ENCODE measurements at regions of chr17 and their contacts with region 1.

Region 1: GRCh38 chr17:17416007-17416399 is 60.8 kb upstream of the MED9 start:
- DNase-seq: no peak
- ATAC-seq: peak in 2 of 8 donors; percentile 21 to 25
- H3K4me3 ChIP-seq: no peak overlapping the region
- H3K27ac ChIP-seq: peak overlapping the region in 9 of 10 donors; percentile 14 to 77 (median 71)
- H3K4me1 ChIP-seq: peaks cover 2 to 69% (median 44%) of the 10 kb centered on the region in 9 donors
- H3K27me3 ChIP-seq: no peaks in the 10 kb centered on the region
- CTCF ChIP-seq: no peak

Region 2: DNA sequence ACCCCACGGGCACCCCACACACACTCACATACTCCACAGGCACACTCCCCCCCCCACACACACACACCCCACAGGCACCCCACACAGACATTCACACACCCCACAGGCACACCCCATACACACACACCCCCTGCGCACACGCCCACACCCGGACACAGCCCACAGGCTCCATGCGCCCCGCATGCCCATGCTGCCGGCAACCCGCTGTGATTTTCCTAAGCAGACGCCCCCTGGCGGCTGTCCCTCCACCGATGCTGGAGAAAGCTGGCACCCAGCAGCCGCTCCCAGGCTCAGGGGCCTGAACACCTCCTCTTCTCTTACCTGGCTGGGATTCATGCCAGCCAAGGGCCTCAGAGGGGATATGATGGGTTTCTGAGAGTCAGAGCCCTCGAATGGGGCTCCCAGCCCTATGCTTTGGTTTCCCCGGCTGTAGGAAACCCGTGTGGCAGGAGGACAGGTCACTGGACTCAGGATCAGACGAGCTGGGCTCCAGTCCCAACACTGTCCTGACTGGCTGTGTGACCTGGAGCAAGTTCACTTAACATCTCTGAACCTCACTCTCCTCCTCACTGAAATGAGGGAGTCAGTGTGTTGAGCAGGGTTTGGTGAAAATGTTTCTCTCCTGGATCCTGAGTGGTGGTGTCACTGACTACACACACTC is 424.5 kb before region 1 on chr17:
- intact Hi-C with region 1: no loop called
- DNase-seq: peak; percentile 70 to 86
- ATAC-seq: peak; percentile 42 to 75 (median 70)
- H3K4me3 ChIP-seq: no peak overlapping the region
- H3K27ac ChIP-seq: no peak overlapping the region
- H3K4me1 ChIP-seq: peaks cover 0 to 32% (median 6%) of the 10 kb centered on the region in 9 donors
- H3K27me3 ChIP-seq: no peaks in the 10 kb centered on the region
- CTCF ChIP-seq: peak; percentile 66 to 83 (median 79)

Region 3: DNA sequence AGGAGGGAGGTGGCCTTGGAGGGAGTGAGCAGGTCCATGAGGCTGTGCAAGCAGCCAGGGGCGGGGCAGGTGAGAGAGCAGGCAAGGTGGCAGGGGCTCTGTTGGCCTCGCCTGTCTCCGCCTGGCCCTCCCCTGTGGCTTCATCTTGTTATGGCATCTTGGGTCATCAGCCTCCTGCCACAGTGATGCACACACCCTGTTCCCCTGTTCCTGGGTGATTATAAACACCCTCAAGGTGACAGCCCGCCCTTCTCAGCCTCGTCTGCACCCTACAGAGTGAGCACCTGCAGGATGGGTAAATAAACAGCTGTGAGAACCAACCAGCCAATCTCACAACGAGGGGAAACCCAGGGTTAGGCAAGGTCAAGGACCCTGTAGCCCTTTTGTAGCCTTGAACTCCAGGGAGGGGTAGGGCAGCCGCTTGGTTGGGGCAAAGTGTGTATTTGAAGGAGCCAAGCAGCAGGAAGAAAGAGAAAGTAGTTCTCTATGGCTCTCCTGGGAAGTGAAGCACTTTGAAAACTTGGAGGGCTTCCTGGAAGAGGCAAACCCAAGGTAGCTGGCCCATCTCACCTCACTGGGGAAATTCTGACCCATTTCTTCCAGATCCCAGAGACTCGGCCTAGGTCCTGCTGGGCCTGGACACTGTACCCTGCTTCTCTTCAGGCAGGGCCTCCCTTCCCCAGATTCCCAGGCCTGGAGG is 52.2 kb before region 1 on chr17:
- intact Hi-C with region 1: loop called in 2 of 10 experiments (anchors 5 kb)
- DNase-seq: no peak
- ATAC-seq: peak in 2 of 8 donors; percentile 1 to 29
- H3K4me3 ChIP-seq: no peak overlapping the region
- H3K27ac ChIP-seq: peak overlapping the region in 9 of 10 donors; percentile 35 to 75 (median 57)
- H3K4me1 ChIP-seq: peaks cover 4 to 36% (median 15%) of the 10 kb centered on the region in 9 donors
- H3K27me3 ChIP-seq: no peaks in the 10 kb centered on the region
- CTCF ChIP-seq: no peak

Region 4: GRCh38 chr17:17376362-17376761 is 39.6 kb before region 1 on chr17:
- intact Hi-C with region 1: loop called in 1 of 10 experiments (anchors 5 kb)
- DNase-seq: no peak
- ATAC-seq: peak; percentile 52 to 85 (median 76)
- H3K4me3 ChIP-seq: no peak overlapping the region
- H3K27ac ChIP-seq: no peak overlapping the region
- H3K4me1 ChIP-seq: peaks cover 0 to 9% (median 0%) of the 10 kb centered on the region in 9 donors
- H3K27me3 ChIP-seq: no peaks in the 10 kb centered on the region
- CTCF ChIP-seq: no peak

Region 5: GRCh38 chr17:17391668-17392370 is 24.2 kb before region 1 on chr17:
- intact Hi-C with region 1: no loop called
- DNase-seq: no peak
- ATAC-seq: no peak
- H3K4me3 ChIP-seq: peak overlapping the region in 1 of 10 donors; percentile 18
- H3K27ac ChIP-seq: no peak overlapping the region
- H3K4me1 ChIP-seq: peaks cover 0 to 14% (median 5%) of the 10 kb centered on the region in 9 donors
- H3K27me3 ChIP-seq: no peaks in the 10 kb centered on the region
- CTCF ChIP-seq: no peak

Region 6: GRCh38 chr17:17440010-17440843 is 24.2 kb after region 1 on chr17:
- intact Hi-C with region 1: no loop called
- DNase-seq: peak; percentile 31 to 63
- ATAC-seq: peak in 6 of 8 donors; percentile 12 to 83 (median 59)
- H3K4me3 ChIP-seq: no peak overlapping the region
- H3K27ac ChIP-seq: no peak overlapping the region
- H3K4me1 ChIP-seq: peaks cover 0 to 10% (median 3%) of the 10 kb centered on the region in 9 donors
- H3K27me3 ChIP-seq: no peaks in the 10 kb centered on the region
- CTCF ChIP-seq: peak; percentile 32 to 70 (median 60)

Region 7: GRCh38 chr17:17476865-17477467 is 61.0 kb after region 1 on chr17 and contains the start of gene MED9:
- intact Hi-C with region 1: loop called in 2 of 10 experiments (anchors 5 kb)
- DNase-seq: peak; percentile 95 to 96
- ATAC-seq: peak; percentile 98 to 99 (median 98)
- H3K4me3 ChIP-seq: peak within 1 kb of the TSS; percentile 79 to 99 (median 94)
- H3K27ac ChIP-seq: peak within 1 kb of the TSS; percentile 93 to 100 (median 97)
- H3K4me1 ChIP-seq: peaks cover 9 to 54% (median 46%) of the 10 kb centered on the region in 9 donors
- H3K27me3 ChIP-seq: no peaks in the 10 kb centered on the region
- CTCF ChIP-seq: no peak
- total RNA-seq, gene MED9: 31.4 to 42.0 (median 35.2) TPM